ENCODE measurements at regions of chr2 and their contacts with region 1.

Region 1: GRCh38 chr2:54522624-54523281 is 66.6 kb downstream of the SPTBN1 start:
- DNase-seq: peak; percentile 86
- ATAC-seq: peak; percentile 98
- H3K4me3 ChIP-seq: no peak overlapping the region
- H3K27ac ChIP-seq: no peak overlapping the region
- H3K4me1 ChIP-seq: peaks cover 15% of the 10 kb centered on the region
- H3K27me3 ChIP-seq: no peaks in the 10 kb centered on the region
- CTCF ChIP-seq: peak; percentile 90
- EP300 ChIP-seq: no peak
- POLR2A ChIP-seq: no peak
- RAD21 ChIP-seq: peak; percentile 96

Region 2: DNA sequence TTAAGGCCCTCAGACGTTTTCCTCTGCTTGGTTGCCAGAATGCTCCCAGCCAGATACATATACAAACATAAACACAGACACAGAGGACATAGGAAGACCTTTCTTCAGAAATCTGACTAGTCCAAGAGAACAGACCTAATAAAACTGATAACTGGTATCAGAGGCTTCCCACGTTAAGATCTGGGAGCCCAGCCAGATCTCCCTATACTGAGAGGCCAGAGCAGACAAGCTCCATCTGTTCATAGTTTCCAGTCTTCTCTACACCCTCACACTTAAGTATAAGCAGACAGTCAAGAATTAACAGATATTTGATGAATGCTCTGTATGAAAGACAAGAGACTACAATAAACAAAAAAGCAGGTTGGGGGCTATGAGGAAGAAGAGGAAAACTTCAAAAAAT is 995.7 kb before region 1 on chr2:
- CTCF ChIA-PET with region 1: no interaction called
- POLR2A ChIA-PET with region 1: no interaction called
- in situ Hi-C with region 1: no loop called
- intact Hi-C with region 1: no loop called
- DNase-seq: no peak
- ATAC-seq: no peak
- H3K4me3 ChIP-seq: no peak overlapping the region
- H3K27ac ChIP-seq: no peak overlapping the region
- H3K4me1 ChIP-seq: no peaks in the 10 kb centered on the region
- H3K27me3 ChIP-seq: no peaks in the 10 kb centered on the region
- CTCF ChIP-seq: no peak
- EP300 ChIP-seq: no peak
- POLR2A ChIP-seq: no peak
- RAD21 ChIP-seq: no peak

Region 3: DNA sequence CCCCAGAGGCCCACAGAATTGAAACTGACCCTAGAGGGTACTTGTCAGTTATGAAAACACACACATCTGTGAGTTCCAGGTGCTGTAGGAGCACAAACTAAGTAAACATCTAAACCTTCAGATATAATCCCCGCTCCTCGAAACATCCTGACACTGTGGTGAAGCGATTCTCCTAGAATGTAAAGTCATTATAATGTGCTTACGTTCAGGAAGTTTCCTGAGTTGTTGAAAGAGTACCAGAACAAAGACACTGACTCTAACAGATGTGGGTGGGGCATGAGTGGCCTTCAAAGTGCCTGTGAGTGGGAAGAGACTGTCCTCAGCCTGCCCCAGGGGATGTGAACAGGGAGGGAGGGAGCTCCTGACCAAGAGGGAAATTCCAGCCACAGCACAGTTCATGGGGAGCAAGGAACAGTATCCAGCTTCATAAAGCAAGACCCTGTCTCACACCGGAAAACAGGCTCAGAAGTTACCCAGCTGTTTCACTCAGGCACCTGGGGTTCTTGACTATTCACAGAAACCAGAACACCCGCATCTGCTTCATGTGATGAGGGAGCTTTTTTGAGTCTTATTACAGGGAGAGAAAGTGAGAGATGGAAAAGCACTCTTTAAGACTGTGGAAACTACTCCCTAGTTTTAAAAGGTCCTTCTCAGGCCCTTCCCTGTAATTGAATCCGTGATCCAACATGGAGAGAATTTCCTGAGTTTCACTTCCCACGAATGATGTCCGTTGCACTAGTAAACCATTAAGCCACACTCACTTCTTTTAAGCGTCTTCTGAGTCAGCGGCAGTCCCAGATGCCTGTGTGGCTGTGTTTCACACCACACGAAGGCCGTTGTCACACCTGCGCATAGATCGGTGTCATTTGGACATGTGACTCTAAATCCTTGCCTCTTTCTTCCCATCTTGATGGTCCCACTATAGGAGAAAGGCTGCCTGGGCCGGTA is 112.1 kb after region 1 on chr2:
- CTCF ChIA-PET with region 1: no interaction called
- POLR2A ChIA-PET with region 1: no interaction called
- in situ Hi-C with region 1: no loop called
- intact Hi-C with region 1: loop called (anchors 5 kb)
- DNase-seq: no peak
- ATAC-seq: peak; percentile 24
- H3K4me3 ChIP-seq: no peak overlapping the region
- H3K27ac ChIP-seq: no peak overlapping the region
- H3K4me1 ChIP-seq: peaks cover 37% of the 10 kb centered on the region
- H3K27me3 ChIP-seq: no peaks in the 10 kb centered on the region
- CTCF ChIP-seq: no peak
- EP300 ChIP-seq: no peak
- POLR2A ChIP-seq: peak in 1 of 2 experiments; percentile 27; a peak in 1 of 4 replicates
- RAD21 ChIP-seq: no peak